ENCODE measurements at regions of chr14 and their contacts with region 1.

Region 1: DNA sequence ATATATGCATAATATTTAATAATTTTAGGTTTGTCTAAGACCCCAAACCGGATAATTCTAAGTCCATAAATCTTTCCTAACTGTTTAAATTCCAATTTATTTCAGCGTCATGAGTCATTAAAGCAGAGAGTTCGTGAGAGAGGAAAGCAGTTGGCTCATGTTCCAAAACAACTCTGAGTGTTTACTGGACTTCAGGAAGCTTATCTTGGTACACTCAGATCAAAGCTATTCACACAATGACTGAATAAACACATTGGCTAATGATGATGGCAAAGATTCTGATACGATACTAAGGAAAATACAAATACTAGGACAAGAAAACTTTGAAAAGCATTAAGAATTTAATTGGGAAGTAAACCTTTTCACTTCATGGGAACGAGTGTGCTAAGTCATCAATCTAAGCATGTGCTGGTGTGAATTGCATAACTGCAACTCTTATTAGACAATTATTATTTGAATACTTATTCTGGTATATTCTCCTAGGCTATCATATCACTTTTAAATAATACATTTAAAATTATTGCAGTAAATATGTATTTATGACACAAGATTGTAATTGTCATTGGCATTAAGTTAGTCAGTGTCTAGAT is 34.8 kb upstream of the CLEC14A start:
- DNase-seq: peak; percentile 99
- H3K4me3 ChIP-seq: peak overlapping the region in 1 of 3 experiments; percentile 34
- H3K27ac ChIP-seq: peak overlapping the region; percentile 99
- H3K4me1 ChIP-seq: peaks cover 44% of the 10 kb centered on the region
- H3K27me3 ChIP-seq: no peaks in the 10 kb centered on the region
- CTCF ChIP-seq: no peak
- POLR2A ChIP-seq: peak; percentile 74

Region 2: GRCh38 chr14:38309522-38310277 is 19.0 kb after region 1 on chr14:
- CTCF ChIA-PET with region 1: interaction called, 5 read pairs
- POLR2A ChIA-PET with region 1: interaction called, 5 read pairs
- dilution Hi-C with region 1: no loop called
- intact Hi-C with region 1: loop called (anchors 1 kb)
- DNase-seq: no peak
- H3K4me3 ChIP-seq: peak overlapping the region in 1 of 3 experiments; percentile 23
- H3K27ac ChIP-seq: peak overlapping the region; percentile 74
- H3K4me1 ChIP-seq: peaks cover 40% of the 10 kb centered on the region
- H3K27me3 ChIP-seq: no peaks in the 10 kb centered on the region
- CTCF ChIP-seq: no peak
- POLR2A ChIP-seq: no peak

Region 3: DNA sequence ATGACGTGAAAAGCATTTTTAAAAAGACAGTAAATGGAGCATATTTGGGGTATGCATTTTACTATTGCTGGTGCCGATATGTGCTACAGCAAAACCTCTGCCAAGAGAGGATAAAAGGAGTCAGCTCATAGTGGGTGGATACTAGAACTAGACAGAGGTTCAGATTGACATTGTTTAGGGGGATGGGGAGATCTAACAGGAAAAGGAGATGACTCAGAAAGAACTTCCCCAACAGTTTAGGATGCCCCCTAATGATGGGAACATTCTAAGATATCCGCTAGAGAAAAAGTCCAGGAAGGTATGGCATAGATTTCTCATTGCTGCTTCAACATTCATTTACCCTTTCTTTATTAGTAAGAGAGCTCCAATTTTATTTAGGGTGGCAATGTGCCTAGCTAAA is 75.7 kb after region 1 on chr14:
- CTCF ChIA-PET with region 1: interaction called, 11 read pairs
- POLR2A ChIA-PET with region 1: interaction called, 4 read pairs
- dilution Hi-C with region 1: no loop called
- intact Hi-C with region 1: loop called (anchors 1 kb)
- DNase-seq: peak; percentile 65
- H3K4me3 ChIP-seq: no peak overlapping the region
- H3K27ac ChIP-seq: peak overlapping the region; percentile 65
- H3K4me1 ChIP-seq: peaks cover 39% of the 10 kb centered on the region
- H3K27me3 ChIP-seq: no peaks in the 10 kb centered on the region
- CTCF ChIP-seq: no peak
- POLR2A ChIP-seq: no peak

Region 4: DNA sequence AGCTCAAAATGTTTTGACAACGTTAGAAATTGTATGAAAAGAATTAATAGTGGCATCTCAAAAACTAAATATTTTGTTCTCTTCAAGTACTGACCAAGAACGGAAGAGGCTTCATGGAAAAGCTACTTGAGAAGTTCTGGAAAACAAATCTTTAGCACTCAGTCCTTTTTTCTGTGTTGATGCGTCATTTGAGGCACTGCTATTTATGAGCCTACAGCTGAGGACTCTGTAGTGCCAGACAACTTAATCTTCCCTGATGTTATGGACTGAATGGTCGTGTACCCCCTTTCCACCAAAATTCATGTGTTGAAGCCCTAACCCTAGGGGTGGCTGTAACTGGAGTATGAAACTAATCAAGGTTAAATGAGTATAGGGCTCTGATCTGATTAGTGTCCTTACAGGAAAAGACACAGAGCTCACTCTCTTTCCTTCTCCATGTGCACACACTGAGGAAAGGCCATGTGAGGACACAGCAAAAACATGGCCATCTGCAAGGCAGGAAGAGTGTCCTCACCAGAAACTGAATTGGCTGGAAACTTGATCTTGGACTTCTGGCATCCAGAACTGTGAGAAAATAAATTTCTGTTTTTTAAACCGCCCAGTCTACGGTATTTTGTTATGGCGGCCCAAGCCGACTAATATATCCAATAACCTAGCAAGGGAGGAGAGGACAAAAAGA is 302.2 kb after region 1 on chr14:
- CTCF ChIA-PET with region 1: interaction called, 4 read pairs
- POLR2A ChIA-PET with region 1: no interaction called
- dilution Hi-C with region 1: no loop called
- intact Hi-C with region 1: loop called (anchors 1 kb)
- DNase-seq: no peak
- H3K4me3 ChIP-seq: no peak overlapping the region
- H3K27ac ChIP-seq: no peak overlapping the region
- H3K4me1 ChIP-seq: no peaks in the 10 kb centered on the region
- H3K27me3 ChIP-seq: no peaks in the 10 kb centered on the region
- CTCF ChIP-seq: no peak
- POLR2A ChIP-seq: no peak